A549 (cell line): ENCODE measurements at regions of chr16 and their contacts with region 1.

Region 1: GRCh38 chr16:58661199-58661830 is 23.3 kb downstream of the SLC38A7 start:
- DNase-seq: peak; percentile 87 to 94
- ATAC-seq: peak; percentile 96 to 98
- H3K4me3 ChIP-seq: no peak overlapping the region
- H3K27ac ChIP-seq: no peak overlapping the region
- H3K4me1 ChIP-seq: peaks cover 3% of the 10 kb centered on the region; the same call in 1 of the 3 replicates
- CTCF ChIP-seq: peak; percentile 87
- EP300 ChIP-seq: no peak
- POLR2A ChIP-seq: no peak
- RAD21 ChIP-seq: peak; percentile 88 to 92

Region 2: DNA sequence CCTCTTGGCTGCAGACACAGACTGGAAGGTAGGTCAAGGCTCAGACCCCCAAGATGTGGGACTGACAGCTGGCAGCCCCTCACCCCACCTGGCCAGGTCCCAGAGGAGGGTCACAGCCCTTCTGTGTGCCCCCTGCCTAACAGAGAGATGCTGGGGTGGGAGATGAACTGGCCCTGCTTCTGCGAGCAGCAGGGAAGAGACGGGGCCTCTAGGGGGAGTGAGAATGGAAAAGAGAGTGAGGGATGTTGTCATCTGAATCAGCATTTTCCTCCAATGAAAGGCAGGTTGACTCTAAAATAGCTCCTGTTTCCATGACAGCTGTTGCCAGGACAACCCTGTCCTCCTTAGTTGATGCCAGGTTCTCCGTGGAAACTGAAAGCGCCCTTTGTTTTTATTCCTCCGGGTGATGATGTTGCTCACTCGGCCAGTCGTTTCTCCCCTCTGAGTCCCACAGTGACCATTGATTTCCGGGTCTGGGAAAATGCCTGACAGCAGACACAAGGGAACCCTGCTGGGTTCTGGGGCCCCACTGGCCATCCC is 166.3 kb before region 1 on chr16:
- CTCF ChIA-PET with region 1: interaction called, 29 read pairs
- POLR2A ChIA-PET with region 1: no interaction called
- DNase-seq: peak; percentile 92 to 93
- ATAC-seq: peak; percentile 52 to 73
- H3K4me3 ChIP-seq: no peak overlapping the region
- H3K27ac ChIP-seq: 0 out of 6 replicates have a peak overlapping the region, but pooled peaks of 1 of the 2 experiments have one; percentile 36
- H3K4me1 ChIP-seq: no peaks in the 10 kb centered on the region; the same call in 2 of the 3 replicates
- CTCF ChIP-seq: peak; percentile 52; the same call in 2 of the 3 replicates
- EP300 ChIP-seq: no peak
- POLR2A ChIP-seq: no peak
- RAD21 ChIP-seq: peak in 1 of 2 experiments; percentile 42; a peak in 2 of 5 replicates

Region 3: GRCh38 chr16:58515125-58515870 is 146.0 kb before region 1 on chr16 and contains the start of gene SETD6:
- CTCF ChIA-PET with region 1: interaction called, 110 read pairs
- POLR2A ChIA-PET with region 1: interaction called, 3 read pairs
- DNase-seq: peak; percentile 57 to 86
- ATAC-seq: peak; percentile 73 to 86
- H3K4me3 ChIP-seq: peak within 1 kb of the TSS; percentile 85
- H3K27ac ChIP-seq: peak within 1 kb of the TSS; percentile 87 to 94
- H3K4me1 ChIP-seq: peaks cover 13% of the 10 kb centered on the region; the same call in 2 of the 3 replicates
- CTCF ChIP-seq: no peak
- EP300 ChIP-seq: no peak
- POLR2A ChIP-seq: peak; percentile 67
- RAD21 ChIP-seq: no peak
- polyA plus RNA-seq, gene SETD6: 16.5 and 19.2 TPM in 2 replicates

Region 4: GRCh38 chr16:58543685-58544084 is 117.6 kb before region 1 on chr16:
- CTCF ChIA-PET with region 1: interaction called, 10 read pairs
- POLR2A ChIA-PET with region 1: no interaction called
- DNase-seq: no peak
- ATAC-seq: no peak
- H3K4me3 ChIP-seq: no peak overlapping the region
- H3K27ac ChIP-seq: no peak overlapping the region
- H3K4me1 ChIP-seq: no peaks in the 10 kb centered on the region
- CTCF ChIP-seq: no peak
- EP300 ChIP-seq: no peak
- POLR2A ChIP-seq: no peak
- RAD21 ChIP-seq: no peak

Region 5: DNA sequence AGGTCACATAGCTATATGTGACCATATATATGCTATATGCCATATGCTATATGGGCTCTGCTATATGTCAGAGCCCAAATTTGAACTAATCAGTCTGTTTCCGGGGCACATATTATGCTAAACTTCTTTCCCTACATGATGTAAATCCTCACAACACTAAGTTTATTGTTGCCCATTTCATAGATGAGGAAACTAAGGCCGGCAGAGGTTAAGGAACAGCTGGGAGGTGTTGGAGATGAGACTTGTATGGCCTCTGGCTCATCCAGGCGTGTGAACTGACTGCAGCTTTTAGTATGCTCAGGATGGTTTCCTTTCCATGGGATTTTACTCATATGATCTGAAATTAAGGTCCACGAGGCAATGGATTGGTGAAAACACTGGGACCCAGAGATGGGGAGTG is 14.2 kb before region 1 on chr16:
- CTCF ChIA-PET with region 1: interaction called, 23 read pairs
- POLR2A ChIA-PET with region 1: no interaction called
- DNase-seq: no peak
- ATAC-seq: no peak
- H3K4me3 ChIP-seq: no peak overlapping the region
- H3K27ac ChIP-seq: no peak overlapping the region
- H3K4me1 ChIP-seq: no peaks in the 10 kb centered on the region
- CTCF ChIP-seq: no peak
- EP300 ChIP-seq: no peak
- POLR2A ChIP-seq: no peak
- RAD21 ChIP-seq: no peak

Region 6: GRCh38 chr16:58678716-58679115 is 17.4 kb after region 1 on chr16:
- CTCF ChIA-PET with region 1: interaction called, 30 read pairs
- POLR2A ChIA-PET with region 1: no interaction called
- DNase-seq: peak in 1 of 2 experiments; percentile 55
- ATAC-seq: peak; percentile 66 to 83; a peak in 5 of 6 replicates
- H3K4me3 ChIP-seq: no peak overlapping the region
- H3K27ac ChIP-seq: no peak overlapping the region
- H3K4me1 ChIP-seq: peaks cover 4% of the 10 kb centered on the region; the same call in 1 of the 3 replicates
- CTCF ChIP-seq: peak; percentile 30; the same call in 2 of the 3 replicates
- EP300 ChIP-seq: no peak
- POLR2A ChIP-seq: no peak
- RAD21 ChIP-seq: peak; percentile 38 to 55; a peak in 4 of 5 replicates